ENCODE measurements at regions of chr15 and their contacts with region 1.

Region 1: DNA sequence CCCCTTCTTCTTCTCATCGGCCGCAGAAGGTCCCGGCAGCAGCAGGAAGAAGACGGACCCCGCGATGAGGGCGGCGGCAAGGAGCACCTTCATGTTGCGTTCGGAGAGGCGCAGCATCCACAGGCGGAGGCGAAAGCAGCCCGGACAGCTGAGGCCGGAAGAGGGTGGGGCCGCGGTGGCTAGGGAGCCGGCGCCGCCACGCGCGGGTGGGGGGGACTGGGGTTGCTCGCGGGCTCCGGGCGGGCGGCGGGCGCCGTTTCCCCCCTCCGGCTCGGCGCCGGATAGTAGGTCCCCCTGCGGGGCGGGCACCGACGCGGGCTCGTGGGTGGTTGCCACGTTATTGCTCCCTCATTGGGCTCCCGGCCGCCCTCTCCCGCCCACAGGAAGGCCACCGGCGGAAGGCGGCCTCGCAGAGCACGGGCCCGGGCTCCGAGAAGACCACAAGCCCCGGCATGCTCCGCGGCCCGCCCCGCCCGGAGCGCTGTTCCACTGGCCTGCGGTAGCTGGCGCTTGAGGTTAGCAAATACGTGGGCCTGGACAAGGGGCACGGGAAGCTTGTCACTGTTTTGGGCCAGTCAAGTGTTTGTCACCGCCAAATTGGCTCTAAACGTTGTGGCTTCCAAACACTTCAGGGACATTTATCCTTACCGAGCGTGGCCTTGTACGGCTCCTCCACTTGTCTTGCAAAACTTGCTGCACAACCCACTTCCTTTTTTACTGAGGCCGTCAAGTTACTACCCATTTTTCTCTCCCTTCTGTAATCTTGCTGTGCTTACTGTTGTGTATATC is at the start of gene PPIB:
- DNase-seq: peak; percentile 98
- H3K4me3 Mint-ChIP-seq: peak within 1 kb of the TSS; percentile 80
- H3K27ac Mint-ChIP-seq: peak within 1 kb of the TSS; percentile 86
- H3K4me1 Mint-ChIP-seq: peaks cover 42% of the 10 kb centered on the region
- H3K27me3 Mint-ChIP-seq: no peaks in the 10 kb centered on the region
- total RNA-seq, gene PPIB: 187 to 202 TPM

Region 2: DNA sequence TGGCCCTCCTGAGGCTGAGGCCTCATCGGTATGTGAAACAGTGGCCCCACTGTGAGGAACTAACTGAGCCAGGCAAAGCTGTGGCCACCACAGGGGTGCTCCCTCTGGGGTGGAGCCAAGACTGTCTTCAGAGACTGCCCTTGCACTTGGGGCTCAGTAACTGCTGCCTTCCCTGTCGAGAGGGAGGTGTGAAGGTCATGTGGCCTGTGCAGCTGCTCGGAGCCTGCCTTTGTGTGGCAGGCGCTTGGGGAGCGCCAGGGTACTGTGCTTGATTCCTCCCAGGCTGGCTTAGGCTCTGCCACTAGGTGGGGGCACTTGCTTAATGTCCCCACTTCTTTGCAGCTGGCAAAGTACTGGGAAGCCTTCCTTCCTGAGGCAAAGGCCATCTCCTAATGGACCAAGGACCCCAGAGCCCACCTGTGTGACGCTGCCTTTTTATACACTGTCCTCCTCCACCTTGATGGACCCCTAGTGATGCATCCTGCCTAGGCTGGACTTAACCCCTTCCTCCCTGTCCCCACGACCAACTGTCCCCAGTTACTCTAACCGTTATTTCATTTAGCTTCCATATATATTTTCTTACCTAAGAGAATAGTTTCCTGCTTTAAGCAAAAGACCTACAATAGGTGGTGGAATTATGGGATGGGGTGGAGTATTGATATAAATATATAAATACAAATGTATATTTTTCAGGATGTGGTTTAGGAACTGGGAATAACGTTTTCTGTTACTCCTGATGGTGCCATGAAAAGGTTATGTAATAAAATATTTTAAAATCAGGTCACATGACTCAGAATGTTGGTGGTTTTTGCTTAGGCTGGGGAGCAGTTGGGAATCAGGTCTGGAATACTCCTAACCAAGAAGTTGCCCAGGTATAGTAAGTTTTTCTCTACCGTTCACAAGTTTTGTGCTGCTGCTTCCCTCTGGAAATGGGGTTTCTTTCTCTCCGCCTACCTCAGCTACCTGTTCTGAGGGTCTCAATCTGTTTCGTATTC is 25.5 kb before region 1 on chr15:
- CTCF ChIA-PET with region 1: no interaction called
- intact Hi-C with region 1: no loop called
- DNase-seq: no peak
- H3K4me3 Mint-ChIP-seq: no peak overlapping the region
- H3K27ac Mint-ChIP-seq: no peak overlapping the region
- H3K4me1 Mint-ChIP-seq: no peaks in the 10 kb centered on the region
- H3K27me3 Mint-ChIP-seq: no peaks in the 10 kb centered on the region

Region 3: DNA sequence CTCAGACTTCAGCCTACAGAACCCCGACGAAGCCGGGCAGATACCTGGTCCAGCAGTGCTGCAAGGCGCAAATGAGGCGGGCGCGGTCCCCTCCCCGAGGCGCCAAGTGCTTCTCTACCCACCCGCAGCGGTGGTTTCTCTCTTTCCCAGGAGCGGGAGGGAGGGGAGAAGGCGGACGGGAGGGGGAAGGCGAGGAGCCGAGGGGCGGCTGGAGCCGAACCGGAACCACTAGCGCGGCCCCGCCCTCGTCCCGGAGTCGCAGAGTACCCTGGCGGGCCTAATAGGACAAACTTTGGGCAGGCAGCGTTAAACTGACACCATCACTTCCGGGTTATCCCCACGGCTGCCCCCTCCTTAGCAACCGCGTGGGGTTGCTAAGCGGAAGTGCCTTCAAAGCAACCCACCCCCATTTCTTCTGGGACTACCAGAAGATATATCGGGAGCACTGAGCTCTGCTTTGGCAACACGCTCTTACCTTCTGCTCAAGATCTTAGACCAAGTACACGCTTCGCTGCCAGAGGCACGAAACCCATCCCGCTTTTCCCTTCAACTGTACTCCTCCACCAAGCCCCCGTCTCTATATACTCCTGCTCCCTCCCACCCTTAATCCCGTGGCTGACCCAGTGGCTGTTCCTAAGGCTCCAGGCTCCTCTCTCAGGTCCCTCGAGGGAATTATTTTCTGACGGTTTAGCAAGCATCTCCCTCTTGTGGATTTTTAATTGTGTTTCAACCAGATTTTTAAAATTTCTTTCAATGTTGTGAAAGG is 193.1 kb after region 1 on chr15 and contains the start of gene CSNK1G1:
- CTCF ChIA-PET with region 1: no interaction called
- intact Hi-C with region 1: loop called (anchors 1 kb)
- DNase-seq: peak; percentile 88
- H3K4me3 Mint-ChIP-seq: peak within 1 kb of the TSS; percentile 89
- H3K27ac Mint-ChIP-seq: peak within 1 kb of the TSS; percentile 74
- H3K4me1 Mint-ChIP-seq: peaks cover 17% of the 10 kb centered on the region
- H3K27me3 Mint-ChIP-seq: no peaks in the 10 kb centered on the region
- total RNA-seq, gene CSNK1G1: 14.8 to 16.6 TPM

Region 4: GRCh38 chr15:64460206-64460734 is 297.2 kb after region 1 on chr15 and contains the start of gene ZNF609:
- CTCF ChIA-PET with region 1: no interaction called
- intact Hi-C with region 1: loop called (anchors 2 kb)
- DNase-seq: peak; percentile 94
- H3K4me3 Mint-ChIP-seq: peak within 1 kb of the TSS; percentile 85
- H3K27ac Mint-ChIP-seq: peak within 1 kb of the TSS; percentile 82
- H3K4me1 Mint-ChIP-seq: peaks cover 77% of the 10 kb centered on the region
- H3K27me3 Mint-ChIP-seq: no peaks in the 10 kb centered on the region
- total RNA-seq, gene ZNF609: 39.5 to 40.4 TPM

Region 5: GRCh38 chr15:64681424-64682024 is 518.5 kb after region 1 on chr15:
- CTCF ChIA-PET with region 1: no interaction called
- intact Hi-C with region 1: loop called (anchors 5 kb)
- DNase-seq: peak; percentile 38
- H3K4me3 Mint-ChIP-seq: no peak overlapping the region
- H3K27ac Mint-ChIP-seq: no peak overlapping the region
- H3K4me1 Mint-ChIP-seq: peaks cover 2% of the 10 kb centered on the region
- H3K27me3 Mint-ChIP-seq: no peaks in the 10 kb centered on the region

Region 6: DNA sequence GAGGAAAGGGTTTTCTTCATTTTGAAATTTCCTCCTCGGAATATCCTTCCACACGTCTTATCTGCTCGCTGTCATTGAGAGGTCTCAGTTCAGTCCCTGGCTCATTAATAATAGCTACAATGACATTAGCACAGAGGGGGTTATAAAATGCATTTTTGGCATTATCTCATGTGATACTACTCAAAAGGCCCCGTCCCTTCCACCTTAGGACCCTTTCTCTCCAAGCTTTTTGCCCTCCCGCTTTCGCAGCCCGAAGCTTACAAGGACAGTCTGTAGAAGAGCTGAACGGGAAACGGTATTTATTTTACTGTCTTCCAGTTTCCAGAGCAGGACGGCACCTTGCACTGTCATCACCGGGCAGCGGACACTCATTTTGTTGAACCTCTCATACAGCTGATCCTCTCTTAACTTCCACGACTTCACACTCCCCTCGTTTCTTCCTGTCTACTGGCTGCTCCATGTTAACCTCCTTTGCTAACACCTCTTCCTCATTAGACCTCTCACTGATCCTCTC is 673.0 kb after region 1 on chr15:
- CTCF ChIA-PET with region 1: no interaction called
- intact Hi-C with region 1: loop called (anchors 5 kb)
- DNase-seq: no peak
- H3K4me3 Mint-ChIP-seq: peak overlapping the region; percentile 55
- H3K27ac Mint-ChIP-seq: peak overlapping the region; percentile 64
- H3K4me1 Mint-ChIP-seq: peaks cover 36% of the 10 kb centered on the region
- H3K27me3 Mint-ChIP-seq: no peaks in the 10 kb centered on the region

Measured in activated naive CD4-positive, alpha-beta T cell treated with anti-CD3 and anti-CD28 coated beads for 36 hours (primary cell).